ENCODE measurements at regions of chr12 and their contacts with region 1.

Region 1: GRCh38 chr12:56127888-56128669 is at the start of gene ESYT1:
- DNase-seq: peak; percentile 100
- ATAC-seq: peak; percentile 91
- H3K4me3 Mint-ChIP-seq: peak within 1 kb of the TSS; percentile 98
- H3K27ac Mint-ChIP-seq: peak within 1 kb of the TSS; percentile 93
- H3K4me1 Mint-ChIP-seq: peaks cover 66% of the 10 kb centered on the region
- H3K27me3 Mint-ChIP-seq: no peaks in the 10 kb centered on the region
- total RNA-seq, gene ESYT1: 225 to 241 TPM

Region 2: GRCh38 chr12:55973598-55974307 is 154.3 kb before region 1 on chr12 and contains the start of gene RAB5B:
- CTCF ChIA-PET with region 1: no interaction called
- DNase-seq: peak; percentile 100
- ATAC-seq: peak; percentile 93
- H3K4me3 Mint-ChIP-seq: no peak within 1 kb of the TSS
- H3K27ac Mint-ChIP-seq: no peak within 1 kb of the TSS
- H3K4me1 Mint-ChIP-seq: peaks cover 29% of the 10 kb centered on the region
- H3K27me3 Mint-ChIP-seq: no peaks in the 10 kb centered on the region
- total RNA-seq, gene RAB5B: 46.4 to 55.6 TPM

Region 3: DNA sequence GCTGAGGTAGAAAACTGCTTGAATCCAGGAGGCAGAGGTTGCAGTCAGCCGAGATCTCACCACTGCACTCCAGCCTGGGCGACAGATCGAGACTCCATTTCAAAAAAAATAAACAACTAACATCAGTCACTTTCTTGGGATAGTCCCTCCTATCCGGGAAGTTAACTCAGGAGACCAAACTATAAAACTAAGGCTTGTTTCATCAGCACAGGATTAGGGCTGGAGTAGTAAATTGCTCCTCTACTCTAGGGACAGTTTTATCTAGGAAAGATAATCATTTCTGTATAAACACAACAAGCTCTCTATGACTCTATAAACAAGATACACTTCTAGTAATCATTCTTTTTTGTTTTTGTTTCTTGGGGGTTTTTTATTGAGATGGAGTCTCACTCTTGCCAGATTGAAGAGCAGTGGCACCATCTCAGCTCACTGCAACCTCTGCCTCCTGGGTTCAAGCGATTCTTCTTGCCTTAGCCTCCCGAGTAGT is 74.6 kb before region 1 on chr12:
- CTCF ChIA-PET with region 1: no interaction called
- DNase-seq: no peak
- ATAC-seq: no peak
- H3K4me3 Mint-ChIP-seq: no peak overlapping the region
- H3K27ac Mint-ChIP-seq: no peak overlapping the region
- H3K4me1 Mint-ChIP-seq: peaks cover 9% of the 10 kb centered on the region
- H3K27me3 Mint-ChIP-seq: no peaks in the 10 kb centered on the region

Region 4: DNA sequence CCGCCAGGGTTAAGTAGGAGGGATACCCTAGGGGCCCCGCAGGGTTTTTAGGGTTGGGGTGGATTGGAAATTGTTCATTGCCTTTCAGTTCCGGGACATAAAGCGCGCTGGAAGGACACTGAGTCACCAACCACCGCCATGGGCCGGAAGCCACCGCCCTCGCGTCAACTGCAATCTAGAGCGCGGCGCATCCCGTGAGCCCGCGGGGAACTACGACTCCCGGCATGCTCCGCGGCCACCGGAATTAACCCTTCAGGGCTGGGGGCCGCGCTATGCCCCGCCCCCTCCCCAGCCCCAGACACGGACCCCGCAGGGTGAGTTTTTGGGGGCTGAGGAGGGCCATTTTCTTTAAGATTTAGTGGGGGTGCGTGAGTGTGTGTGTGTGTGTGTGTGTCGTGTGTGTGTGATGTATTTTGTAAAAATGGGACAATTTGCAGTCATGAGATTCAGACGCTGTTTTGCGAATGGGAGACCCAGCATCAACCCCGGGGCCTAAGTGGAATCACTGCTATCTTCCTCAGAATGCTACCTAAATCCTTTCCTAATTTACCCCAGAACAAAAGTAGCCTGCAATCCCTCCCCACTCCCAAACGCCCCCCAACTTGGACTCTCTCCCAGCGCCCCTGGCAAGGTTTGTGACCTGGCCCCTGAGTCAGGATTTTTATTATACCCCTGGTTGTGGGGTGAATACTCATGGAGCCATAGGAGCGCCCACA is 24.4 kb after region 1 on chr12 and contains the start of gene MYL6B:
- CTCF ChIA-PET with region 1: interaction called, 41 read pairs
- DNase-seq: peak; percentile 97
- ATAC-seq: peak; percentile 94
- H3K4me3 Mint-ChIP-seq: peak within 1 kb of the TSS; percentile 83
- H3K27ac Mint-ChIP-seq: peak within 1 kb of the TSS; percentile 100
- H3K4me1 Mint-ChIP-seq: peaks cover 43% of the 10 kb centered on the region
- H3K27me3 Mint-ChIP-seq: no peaks in the 10 kb centered on the region
- total RNA-seq, gene MYL6B: 67.6 to 85.2 TPM

Region 5: DNA sequence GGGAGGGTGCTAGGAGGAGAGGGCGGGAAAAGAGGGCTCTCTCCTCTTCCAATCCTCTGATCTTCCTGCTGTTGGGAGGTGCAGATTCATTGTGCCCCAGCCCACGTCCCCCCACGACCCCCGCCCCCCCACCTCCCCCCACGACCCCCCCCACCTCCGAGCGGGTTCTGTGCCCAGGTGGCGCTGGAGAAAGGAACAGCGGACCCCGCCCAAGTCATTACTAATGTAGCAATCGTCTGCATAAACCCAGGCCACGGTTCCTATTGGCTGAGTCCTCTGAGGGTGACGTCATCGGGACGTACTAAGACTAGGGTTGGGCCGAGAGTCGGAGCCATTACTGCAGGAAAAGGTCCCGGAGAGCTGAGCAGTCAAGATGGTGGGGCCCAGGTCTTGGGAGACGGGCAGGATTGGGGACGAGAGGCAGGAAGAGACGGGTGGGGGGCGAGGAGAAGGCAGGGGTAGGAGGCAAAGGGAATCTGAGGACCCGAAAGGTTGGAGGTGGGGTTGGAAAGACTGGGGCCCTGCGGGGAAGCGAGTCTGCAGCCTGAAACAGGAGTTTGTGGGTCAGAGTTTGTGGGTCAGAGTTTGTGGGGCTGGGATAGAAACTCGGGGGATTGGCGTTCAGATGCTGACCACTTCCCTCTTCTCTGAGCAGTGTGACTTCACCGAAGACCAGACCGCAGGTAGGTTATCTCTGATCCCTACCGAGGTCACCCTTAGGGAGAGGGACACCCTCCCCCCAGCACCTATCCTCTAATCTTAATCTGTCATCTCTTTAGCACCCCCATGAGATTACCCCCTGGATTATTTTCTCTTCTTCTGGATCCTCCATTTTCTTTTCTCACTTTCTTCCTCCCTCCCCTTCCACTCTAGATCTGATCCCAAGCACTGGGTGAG is 30.2 kb after region 1 on chr12 and contains the start of gene MYL6:
- CTCF ChIA-PET with region 1: interaction called, 61 read pairs
- DNase-seq: peak; percentile 98
- ATAC-seq: peak; percentile 85
- H3K4me3 Mint-ChIP-seq: peak within 1 kb of the TSS; percentile 94
- H3K27ac Mint-ChIP-seq: peak within 1 kb of the TSS; percentile 96
- H3K4me1 Mint-ChIP-seq: peaks cover 51% of the 10 kb centered on the region
- H3K27me3 Mint-ChIP-seq: no peaks in the 10 kb centered on the region
- total RNA-seq, gene MYL6: 1,307 to 1,412 TPM

Measured in activated CD8-positive, alpha-beta memory T cell treated with anti-CD3 and anti-CD28 coated beads, Interleukin-2, amount 10 ng/mL, durations not matched to agents 7 days and 5 days (primary cell).